ENCODE measurements at regions of chr17 and their contacts with region 1.

Region 1: DNA sequence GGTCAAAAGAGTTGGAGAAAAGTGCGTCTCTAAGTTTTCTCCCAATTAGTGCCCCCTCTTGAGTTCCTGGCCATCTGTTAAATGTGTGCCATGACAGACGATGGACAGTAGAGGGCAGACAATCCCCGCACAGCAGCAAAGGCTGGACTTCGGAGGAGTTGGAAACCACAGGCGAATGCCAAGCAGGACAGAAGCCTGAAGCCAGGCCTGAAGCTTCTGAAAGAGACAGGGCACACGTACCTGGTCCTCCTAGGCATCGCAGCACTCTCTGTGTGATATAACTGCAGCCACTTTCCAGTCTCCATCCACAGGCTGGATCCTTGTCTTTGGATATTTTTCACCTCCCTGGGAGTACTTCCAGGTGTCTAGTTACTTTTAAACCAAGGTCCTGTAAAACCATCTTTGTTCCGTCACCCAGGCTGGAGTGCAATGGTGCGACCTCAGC is 14.5 kb downstream of the C17orf100 start:
- DNase-seq: peak; percentile 74
- H3K4me3 ChIP-seq: no peak overlapping the region
- H3K27ac ChIP-seq: no peak overlapping the region
- H3K4me1 ChIP-seq: peaks cover 31% of the 10 kb centered on the region
- H3K27me3 ChIP-seq: no peaks in the 10 kb centered on the region
- CTCF ChIP-seq: peak; percentile 95 to 97

Region 2: GRCh38 chr17:5931616-5932015 is 734.5 kb before region 1 on chr17:
- CTCF ChIA-PET with region 1: no interaction called
- dilution Hi-C with region 1: no loop called
- in situ Hi-C with region 1: no loop called
- intact Hi-C with region 1: no loop called
- DNase-seq: peak; percentile 32
- H3K4me3 ChIP-seq: no peak overlapping the region
- H3K27ac ChIP-seq: no peak overlapping the region
- H3K4me1 ChIP-seq: no peaks in the 10 kb centered on the region
- H3K27me3 ChIP-seq: no peaks in the 10 kb centered on the region
- CTCF ChIP-seq: no peak

Region 3: DNA sequence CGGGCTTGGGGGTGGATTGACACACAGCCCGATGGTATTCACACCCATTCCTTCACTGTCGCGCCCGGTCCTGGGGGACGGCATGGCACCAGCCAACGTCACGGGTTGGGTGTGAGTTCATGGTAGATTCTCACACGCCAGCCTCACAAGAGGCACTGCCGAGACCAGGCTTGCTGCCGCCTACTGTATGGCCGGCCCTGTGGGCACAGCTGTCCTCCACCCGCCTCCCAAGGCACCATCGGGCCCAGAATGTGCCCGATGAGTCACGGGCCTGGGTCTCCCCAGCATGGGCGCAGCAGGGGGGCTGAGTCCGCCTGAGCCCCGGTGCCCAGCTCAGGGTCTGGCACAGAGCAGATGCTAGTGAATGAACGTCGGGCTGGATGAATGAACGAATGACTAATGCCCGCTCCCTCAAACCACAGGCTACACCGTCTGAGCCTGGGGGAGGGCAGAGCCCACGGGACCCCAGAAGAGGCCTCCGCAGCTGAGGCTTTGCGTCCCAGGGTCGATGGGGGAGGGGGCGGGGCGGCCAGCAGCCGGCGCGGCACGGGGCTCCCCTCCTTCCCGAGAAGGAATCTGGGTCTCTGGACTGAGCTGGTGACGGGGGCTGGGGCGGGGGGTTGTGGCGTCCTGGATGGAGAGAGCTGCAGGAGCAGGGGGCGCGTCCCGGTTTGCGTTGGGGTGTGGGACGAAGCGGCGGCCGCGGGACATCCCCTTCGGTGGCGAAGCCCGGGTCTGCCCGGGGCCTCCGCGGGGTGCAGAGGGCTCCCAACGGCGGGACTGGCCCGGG is 110.6 kb before region 1 on chr17:
- CTCF ChIA-PET with region 1: no interaction called
- dilution Hi-C with region 1: no loop called
- in situ Hi-C with region 1: no loop called
- intact Hi-C with region 1: no loop called
- DNase-seq: peak; percentile 76
- H3K4me3 ChIP-seq: peak overlapping the region; percentile 65 to 75 (median 67)
- H3K27ac ChIP-seq: peak overlapping the region; percentile 42
- H3K4me1 ChIP-seq: peaks cover 36% of the 10 kb centered on the region
- H3K27me3 ChIP-seq: no peaks in the 10 kb centered on the region
- CTCF ChIP-seq: peak in 1 of 2 donors; percentile 11

Region 4: GRCh38 chr17:6696906-6697305 is 30.8 kb after region 1 on chr17:
- CTCF ChIA-PET with region 1: no interaction called
- dilution Hi-C with region 1: no loop called
- in situ Hi-C with region 1: no loop called
- intact Hi-C with region 1: no loop called
- DNase-seq: no peak
- H3K4me3 ChIP-seq: no peak overlapping the region
- H3K27ac ChIP-seq: no peak overlapping the region
- H3K4me1 ChIP-seq: no peaks in the 10 kb centered on the region
- H3K27me3 ChIP-seq: no peaks in the 10 kb centered on the region
- CTCF ChIP-seq: no peak

Region 5: DNA sequence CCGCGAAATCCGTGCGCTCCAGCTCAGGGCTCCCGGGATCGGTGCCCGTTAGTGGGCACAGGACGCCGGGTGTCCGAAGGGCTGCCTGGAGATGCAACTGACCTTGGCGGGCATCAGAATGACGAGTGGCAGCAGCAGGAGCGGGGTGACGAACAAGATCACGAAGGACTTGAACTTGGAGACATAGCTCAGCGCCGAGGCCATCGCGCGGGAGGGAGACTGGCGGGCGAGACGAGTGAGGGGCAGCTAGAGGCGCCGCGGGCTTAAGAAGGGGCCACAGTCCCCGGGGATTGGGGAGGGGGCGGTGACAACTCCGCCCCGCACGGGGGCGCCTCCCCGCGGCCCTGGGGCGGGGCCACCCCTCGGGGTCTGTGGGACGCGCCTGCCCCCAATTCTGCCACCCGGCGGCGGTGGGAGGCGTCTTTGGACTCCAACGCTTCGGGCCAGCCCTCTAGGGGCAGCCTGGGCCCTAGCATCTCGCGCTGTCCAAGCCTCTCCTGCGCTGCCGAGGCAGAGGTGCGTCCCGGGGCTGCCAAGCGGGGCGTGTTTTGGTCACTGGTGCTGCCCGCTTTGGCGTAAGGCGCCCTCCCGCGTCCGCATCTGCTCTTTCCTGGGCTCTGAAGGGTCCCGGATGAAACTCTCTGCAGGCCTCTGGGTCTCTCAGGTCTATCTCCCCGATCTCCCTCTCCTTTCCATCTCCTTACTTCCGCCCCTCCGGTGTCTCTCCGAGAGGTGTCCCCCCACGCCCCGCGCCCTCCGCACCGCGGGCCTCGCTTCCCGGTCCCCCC is 47.2 kb after region 1 on chr17 and contains the start of gene SLC13A5:
- CTCF ChIA-PET with region 1: no interaction called
- dilution Hi-C with region 1: no loop called
- in situ Hi-C with region 1: no loop called
- intact Hi-C with region 1: loop called (anchors 5 kb)
- DNase-seq: peak; percentile 11
- H3K4me3 ChIP-seq: peak within 1 kb of the TSS in 1 of 3 experiments; percentile 17
- H3K27ac ChIP-seq: no peak within 1 kb of the TSS
- H3K4me1 ChIP-seq: peaks cover 29% of the 10 kb centered on the region
- H3K27me3 ChIP-seq: no peaks in the 10 kb centered on the region
- CTCF ChIP-seq: peak in 1 of 2 donors; percentile 34
- total RNA-seq, gene SLC13A5: 0.67 TPM in 1 of 2 donors, not detected in the other

Region 6: GRCh38 chr17:6753006-6753445 is 86.9 kb after region 1 on chr17:
- CTCF ChIA-PET with region 1: no interaction called
- dilution Hi-C with region 1: loop called (anchors 5 kb)
- in situ Hi-C with region 1: no loop called
- intact Hi-C with region 1: loop called (anchors 1 kb)
- DNase-seq: peak; percentile 66
- H3K4me3 ChIP-seq: no peak overlapping the region
- H3K27ac ChIP-seq: peak overlapping the region; percentile 92
- H3K4me1 ChIP-seq: peaks cover 24% of the 10 kb centered on the region
- H3K27me3 ChIP-seq: no peaks in the 10 kb centered on the region
- CTCF ChIP-seq: no peak

Region 7: GRCh38 chr17:6843241-6843880 is 177.3 kb after region 1 on chr17:
- CTCF ChIA-PET with region 1: interaction called, 5 read pairs
- dilution Hi-C with region 1: no loop called
- in situ Hi-C with region 1: loop called (anchors 5 to 25 kb)
- intact Hi-C with region 1: loop called (anchors 1 kb)
- DNase-seq: peak; percentile 42
- H3K4me3 ChIP-seq: no peak overlapping the region
- H3K27ac ChIP-seq: no peak overlapping the region
- H3K4me1 ChIP-seq: no peaks in the 10 kb centered on the region
- H3K27me3 ChIP-seq: no peaks in the 10 kb centered on the region
- CTCF ChIP-seq: peak; percentile 42 to 55

Region 8: DNA sequence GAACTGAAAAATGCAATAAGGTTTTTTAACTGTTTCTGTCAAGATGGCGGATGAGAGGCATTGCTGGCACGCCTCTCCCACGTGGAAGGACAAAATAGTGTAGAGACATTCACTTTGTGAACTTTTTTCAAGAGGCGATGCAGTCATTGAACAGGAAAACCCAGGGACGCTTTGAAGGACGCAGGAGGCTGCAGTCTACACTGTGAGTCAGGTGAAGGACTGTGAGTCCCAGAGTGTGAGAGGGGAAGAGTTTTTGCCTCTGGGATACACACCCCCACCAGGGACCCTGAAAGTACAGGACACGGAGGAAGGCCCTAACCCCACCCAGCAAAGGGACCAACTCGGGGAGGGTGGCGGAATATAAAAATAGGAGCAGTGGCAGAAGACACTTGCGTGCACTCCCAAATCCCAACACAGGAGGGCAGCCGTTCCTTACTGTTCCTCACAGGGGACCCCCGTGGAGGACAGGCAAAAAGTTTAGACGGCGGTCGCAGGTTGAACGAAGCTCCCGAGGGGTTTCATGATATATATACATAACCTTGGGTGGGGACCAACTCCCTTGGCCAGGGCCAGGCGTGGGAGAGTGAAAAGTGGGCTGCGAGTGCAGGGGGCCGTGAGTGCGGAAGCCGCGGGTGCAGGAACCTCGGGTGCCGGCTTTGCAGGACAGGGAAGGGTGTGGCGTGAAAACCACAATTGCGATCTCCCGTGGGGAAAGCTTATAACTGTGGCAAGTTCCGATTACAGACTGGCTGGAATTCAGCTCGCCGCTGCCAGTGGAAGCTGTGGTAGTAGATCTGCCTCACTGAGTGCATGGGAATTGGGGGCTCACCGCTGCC is 247.7 kb after region 1 on chr17:
- CTCF ChIA-PET with region 1: no interaction called
- dilution Hi-C with region 1: loop called (anchors 5 kb)
- in situ Hi-C with region 1: loop called in 1 of 2 experiments (anchors 10 kb)
- intact Hi-C with region 1: loop called (anchors 2 kb)
- DNase-seq: no peak
- H3K4me3 ChIP-seq: no peak overlapping the region
- H3K27ac ChIP-seq: no peak overlapping the region
- H3K4me1 ChIP-seq: no peaks in the 10 kb centered on the region
- H3K27me3 ChIP-seq: no peaks in the 10 kb centered on the region
- CTCF ChIP-seq: peak; percentile 43 to 70

Region 9: DNA sequence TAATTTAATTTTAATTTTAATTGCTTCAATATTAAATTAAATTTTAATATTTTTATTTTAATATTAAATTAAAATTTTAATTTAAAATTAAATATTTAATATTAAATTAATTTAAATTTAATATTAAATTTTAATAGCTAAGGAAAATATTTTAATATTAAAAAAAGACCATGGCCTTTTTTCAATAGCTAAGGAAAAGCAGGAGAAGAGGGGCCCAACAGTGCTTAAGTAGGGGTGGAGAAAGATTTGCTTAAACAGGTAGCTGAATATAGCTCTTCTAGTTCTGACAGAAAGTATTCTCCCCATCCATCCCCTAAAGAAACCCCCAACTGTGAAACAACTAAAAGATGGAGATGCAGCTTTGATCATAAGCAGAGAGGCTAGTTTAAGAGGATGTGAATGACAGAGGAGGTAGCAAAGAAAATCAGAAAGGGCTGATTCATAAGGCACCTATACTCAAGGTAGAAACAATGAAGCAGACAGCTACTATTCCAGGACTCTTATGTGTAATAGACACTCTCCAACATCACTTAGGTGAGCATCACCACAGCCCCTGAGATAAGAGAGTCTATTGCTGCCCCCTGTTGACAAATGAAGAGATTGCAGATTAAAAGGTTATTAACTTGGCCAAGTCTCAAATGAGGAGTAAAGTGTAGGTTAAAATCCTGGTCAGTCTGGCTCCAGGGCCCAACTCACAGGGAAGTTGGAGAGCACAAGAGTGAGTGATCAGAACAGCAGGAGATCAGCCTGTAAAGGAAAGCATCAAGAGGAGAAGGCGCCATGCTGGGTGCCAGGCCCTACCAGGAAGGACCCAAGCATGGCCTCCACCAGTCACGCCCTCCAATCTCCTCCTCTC is 338.5 kb after region 1 on chr17:
- CTCF ChIA-PET with region 1: interaction called, 5 read pairs
- dilution Hi-C with region 1: no loop called
- in situ Hi-C with region 1: loop called in 1 of 2 experiments (anchors 5 kb)
- intact Hi-C with region 1: loop called (anchors 1 kb)
- DNase-seq: peak; percentile 69
- H3K4me3 ChIP-seq: no peak overlapping the region
- H3K27ac ChIP-seq: no peak overlapping the region
- H3K4me1 ChIP-seq: no peaks in the 10 kb centered on the region
- H3K27me3 ChIP-seq: no peaks in the 10 kb centered on the region
- CTCF ChIP-seq: peak; percentile 66 to 69

Region 10: DNA sequence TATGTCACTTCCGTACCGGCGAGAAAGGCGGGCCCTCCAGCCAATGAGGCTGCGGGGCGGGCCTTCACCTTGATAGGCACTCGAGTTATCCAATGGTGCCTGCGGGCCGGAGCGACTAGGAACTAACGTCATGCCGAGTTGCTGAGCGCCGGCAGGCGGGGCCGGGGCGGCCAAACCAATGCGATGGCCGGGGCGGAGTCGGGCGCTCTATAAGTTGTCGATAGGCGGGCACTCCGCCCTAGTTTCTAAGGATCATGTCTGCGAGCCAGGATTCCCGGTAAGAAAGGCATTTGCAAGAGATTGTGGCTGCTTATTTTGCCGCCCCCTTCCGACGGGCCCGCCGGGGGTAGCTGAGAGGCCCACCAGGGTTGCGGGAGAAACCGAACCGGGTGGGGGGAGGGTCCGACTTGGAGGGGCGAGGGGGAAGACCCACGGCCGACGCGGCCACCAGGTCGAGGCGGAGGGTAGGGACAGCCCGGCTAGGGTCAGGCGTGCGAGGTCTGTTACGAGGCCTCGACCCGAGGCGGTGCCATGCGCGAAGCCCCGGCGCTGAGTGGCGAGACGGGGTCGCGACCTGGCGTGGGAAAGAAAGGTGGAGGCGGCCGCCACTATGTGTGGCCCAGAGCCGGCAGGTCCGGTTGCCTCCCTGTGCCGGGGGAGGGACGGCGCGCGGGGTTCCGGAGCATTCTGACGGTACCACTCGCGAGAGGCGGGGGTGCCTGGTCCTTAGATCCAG is 906.7 kb after region 1 on chr17:
- CTCF ChIA-PET with region 1: no interaction called
- dilution Hi-C with region 1: no loop called
- in situ Hi-C with region 1: no loop called
- intact Hi-C with region 1: no loop called
- DNase-seq: peak; percentile 99
- H3K4me3 ChIP-seq: peak overlapping the region; percentile 95 to 98 (median 98)
- H3K27ac ChIP-seq: peak overlapping the region; percentile 95
- H3K4me1 ChIP-seq: peaks cover 38% of the 10 kb centered on the region
- H3K27me3 ChIP-seq: no peaks in the 10 kb centered on the region
- CTCF ChIP-seq: no peak